Activated CD4-positive, alpha-beta memory T cell treated with anti-CD3 and anti-CD28 coated beads, Interleukin-2, amount 10 ng/mL, durations not matched to agents 7 days and 5 days (primary cell): ENCODE measurements at regions of chr17 and their contacts with region 1.

Region 1: DNA sequence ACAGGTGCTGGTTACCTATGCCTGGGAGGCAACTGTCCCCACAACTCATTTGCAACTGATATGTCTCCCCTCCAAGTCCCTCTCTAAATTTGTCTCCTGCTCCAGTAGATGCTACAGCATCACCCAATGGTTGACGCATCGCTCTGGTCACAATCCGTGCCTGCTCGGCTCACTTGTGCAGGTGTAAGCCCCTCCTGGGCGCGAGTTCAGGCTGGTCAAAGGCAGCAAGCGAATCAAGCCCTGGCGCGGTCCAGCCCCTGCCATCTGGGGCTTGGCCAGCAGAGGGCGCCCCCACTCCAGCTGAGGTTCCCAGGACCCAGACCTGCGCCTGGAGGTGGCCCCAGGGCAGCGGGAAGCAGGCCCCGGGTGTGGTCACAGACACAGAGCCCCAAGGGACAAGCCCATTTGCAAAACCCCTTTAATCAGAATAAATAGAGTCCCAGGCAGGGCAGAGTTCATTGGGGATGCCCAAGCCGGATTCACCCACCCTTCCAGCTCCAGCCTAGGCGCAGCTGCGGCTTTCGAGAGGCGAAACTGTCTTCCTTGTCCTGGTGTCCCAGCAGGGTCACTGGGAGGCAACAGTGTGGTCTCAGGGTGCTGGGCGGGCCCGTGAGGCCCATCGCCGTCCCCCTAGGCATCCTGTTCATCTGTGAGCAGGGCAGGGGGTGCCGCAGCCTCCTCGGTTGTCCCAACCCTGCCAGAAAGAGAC is 15.9 kb downstream of the TMC6 start:
- DNase-seq: peak; percentile 81
- H3K4me3 Mint-ChIP-seq: no peak overlapping the region
- H3K27ac Mint-ChIP-seq: peak overlapping the region; percentile 76
- H3K4me1 Mint-ChIP-seq: peaks cover 37% of the 10 kb centered on the region
- H3K27me3 Mint-ChIP-seq: no peaks in the 10 kb centered on the region

Region 2: GRCh38 chr17:78128551-78129350 is 16.1 kb after region 1 on chr17 and contains the start of gene TMC6:
- CTCF ChIA-PET with region 1: interaction called, 9 read pairs
- POLR2A ChIA-PET with region 1: interaction called, 332 read pairs
- DNase-seq: peak; percentile 79
- H3K4me3 Mint-ChIP-seq: peak within 1 kb of the TSS; percentile 88
- H3K27ac Mint-ChIP-seq: peak within 1 kb of the TSS; percentile 100
- H3K4me1 Mint-ChIP-seq: peaks cover 49% of the 10 kb centered on the region
- H3K27me3 Mint-ChIP-seq: no peaks in the 10 kb centered on the region
- total RNA-seq, gene TMC6: 460 to 463 TPM

Region 3: GRCh38 chr17:78133971-78134898 is 21.6 kb after region 1 on chr17:
- CTCF ChIA-PET with region 1: interaction called, 11 read pairs
- POLR2A ChIA-PET with region 1: interaction called, 332 read pairs
- DNase-seq: peak; percentile 88
- H3K4me3 Mint-ChIP-seq: peak overlapping the region; percentile 87
- H3K27ac Mint-ChIP-seq: peak overlapping the region; percentile 89
- H3K4me1 Mint-ChIP-seq: peaks cover 74% of the 10 kb centered on the region
- H3K27me3 Mint-ChIP-seq: no peaks in the 10 kb centered on the region